Ovary (tissue), 10 donors: ENCODE measurements at regions of chr2 and their contacts with region 1.

Region 1: GRCh38 chr2:69724540-69725159 is 17.3 kb upstream of the ANXA4 start:
- DNase-seq: peak; percentile 78 to 89 (median 87)
- H3K4me3 ChIP-seq: peak overlapping the region; percentile 17
- H3K27ac ChIP-seq: no peak overlapping the region
- H3K4me1 ChIP-seq: no peaks in the 10 kb centered on the region
- H3K27me3 ChIP-seq: no peaks in the 10 kb centered on the region
- CTCF ChIP-seq: peak; percentile 83 to 92 (median 85)
- EP300 ChIP-seq: no peak
- POLR2A ChIP-seq: no peak

Region 2: DNA sequence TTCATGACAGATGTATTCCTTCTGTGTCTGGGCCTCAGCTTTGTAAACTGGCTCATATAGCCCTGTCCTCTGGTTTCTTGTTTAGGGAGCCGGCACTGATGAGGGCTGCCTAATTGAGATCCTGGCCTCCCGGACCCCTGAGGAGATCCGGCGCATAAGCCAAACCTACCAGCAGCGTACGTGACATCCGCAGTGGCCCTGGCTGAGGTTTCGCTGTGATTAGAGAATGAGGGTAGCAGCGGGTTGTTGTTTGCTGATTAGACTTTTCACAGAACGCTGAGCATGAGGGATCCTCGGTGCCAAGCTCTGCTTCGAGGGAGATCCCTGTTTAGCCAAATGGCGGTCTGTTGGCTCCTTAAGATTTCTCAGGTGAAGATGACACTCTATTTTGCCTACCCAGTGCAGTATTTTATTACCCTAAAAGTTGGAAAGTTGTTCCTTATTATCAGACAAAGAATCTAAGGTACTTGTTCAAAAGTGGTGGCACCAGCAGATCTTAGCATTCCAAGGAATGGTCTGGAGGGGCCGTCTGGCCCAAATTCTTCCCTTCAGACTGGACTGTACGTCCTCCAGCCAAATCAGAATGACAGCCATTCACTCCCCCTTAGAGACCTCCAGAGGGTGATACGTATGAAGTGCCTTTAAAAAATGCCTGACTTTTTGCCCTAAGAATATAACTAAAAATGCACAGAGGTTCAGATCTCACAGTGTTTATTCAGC is 83.3 kb after region 1 on chr2:
- intact Hi-C with region 1: loop called in 1 of 4 experiments (anchors 5 kb)
- DNase-seq: no peak
- H3K4me3 ChIP-seq: no peak overlapping the region
- H3K27ac ChIP-seq: no peak overlapping the region
- H3K4me1 ChIP-seq: no peaks in the 10 kb centered on the region
- H3K27me3 ChIP-seq: no peaks in the 10 kb centered on the region
- CTCF ChIP-seq: no peak
- EP300 ChIP-seq: no peak
- POLR2A ChIP-seq: no peak

Region 3: GRCh38 chr2:69816923-69817542 is 92.4 kb after region 1 on chr2:
- intact Hi-C with region 1: loop called in 3 of 4 experiments (anchors 1 to 2 kb)
- DNase-seq: peak in 4 of 5 donors; percentile 46 to 87 (median 62)
- H3K4me3 ChIP-seq: no peak overlapping the region
- H3K27ac ChIP-seq: no peak overlapping the region
- H3K4me1 ChIP-seq: no peaks in the 10 kb centered on the region
- H3K27me3 ChIP-seq: no peaks in the 10 kb centered on the region
- CTCF ChIP-seq: peak; percentile 72 to 93 (median 86)
- EP300 ChIP-seq: no peak
- POLR2A ChIP-seq: no peak